ENCODE measurements at regions of chr14 and their contacts with region 1.

Region 1: DNA sequence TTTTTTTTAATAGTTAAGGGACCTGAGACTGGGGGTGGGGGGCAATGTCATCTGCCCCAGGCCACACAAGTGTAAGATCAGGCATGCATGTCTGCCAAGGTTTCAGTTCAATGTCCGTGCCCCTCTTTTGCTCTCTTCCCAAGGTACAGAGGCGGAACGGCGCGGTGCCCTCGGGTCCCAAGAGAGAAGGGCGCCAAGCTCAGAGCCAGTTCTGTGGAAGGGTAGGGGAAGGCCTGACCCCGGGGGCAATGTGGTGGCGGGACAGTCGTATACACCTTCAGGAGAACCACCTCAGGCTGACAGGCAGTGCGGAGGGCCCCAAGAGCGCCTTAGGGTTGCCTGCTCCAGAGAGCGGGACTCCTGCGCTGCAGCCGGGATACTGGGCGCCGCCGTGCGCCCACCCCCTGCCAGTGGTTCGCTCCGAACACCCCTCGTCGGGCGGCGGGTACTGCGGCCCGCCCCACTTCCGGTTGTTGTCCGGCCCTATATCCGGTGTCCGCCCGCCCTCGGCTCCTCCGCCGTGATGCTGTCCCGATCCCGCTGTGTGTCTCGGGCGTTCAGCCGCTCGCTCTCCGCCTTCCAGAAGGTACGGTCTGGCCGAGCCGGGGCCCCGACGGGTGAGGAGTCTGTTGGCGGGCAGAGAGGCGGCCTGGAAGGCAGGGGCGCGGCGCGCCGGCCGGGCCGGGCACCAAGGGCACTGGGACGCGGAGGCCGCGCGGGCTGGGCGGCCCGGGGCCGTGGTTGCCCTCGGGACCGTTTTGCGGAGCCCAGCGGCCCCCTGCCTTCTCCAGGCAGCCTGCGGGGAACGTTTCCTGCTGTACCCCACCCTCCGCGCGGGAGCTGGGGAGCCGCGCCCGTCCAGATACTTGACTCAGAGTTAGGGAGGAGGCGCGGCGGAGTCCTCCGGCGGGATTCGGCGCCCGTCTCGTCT is at the start of gene DLST:
- DNase-seq: peak; percentile 87
- H3K4me3 Mint-ChIP-seq: peak within 1 kb of the TSS; percentile 91
- H3K27ac Mint-ChIP-seq: peak within 1 kb of the TSS; percentile 92
- H3K4me1 Mint-ChIP-seq: peaks cover 61% of the 10 kb centered on the region
- H3K27me3 Mint-ChIP-seq: no peaks in the 10 kb centered on the region
- total RNA-seq, gene DLST: 106 to 108 TPM

Region 2: GRCh38 chr14:74867673-74868072 is 14.0 kb before region 1 on chr14:
- CTCF ChIA-PET with region 1: interaction called, 115 read pairs
- POLR2A ChIA-PET with region 1: interaction called, 54 read pairs
- DNase-seq: peak; percentile 78
- H3K4me3 Mint-ChIP-seq: no peak overlapping the region
- H3K27ac Mint-ChIP-seq: peak overlapping the region; percentile 55
- H3K4me1 Mint-ChIP-seq: peaks cover 19% of the 10 kb centered on the region
- H3K27me3 Mint-ChIP-seq: no peaks in the 10 kb centered on the region

Region 3: GRCh38 chr14:74893614-74894091 is 12.0 kb after region 1 on chr14:
- CTCF ChIA-PET with region 1: interaction called, 6 read pairs
- POLR2A ChIA-PET with region 1: interaction called, 27 read pairs
- DNase-seq: no peak
- H3K4me3 Mint-ChIP-seq: no peak overlapping the region
- H3K27ac Mint-ChIP-seq: no peak overlapping the region
- H3K4me1 Mint-ChIP-seq: peaks cover 8% of the 10 kb centered on the region
- H3K27me3 Mint-ChIP-seq: no peaks in the 10 kb centered on the region

Region 4: DNA sequence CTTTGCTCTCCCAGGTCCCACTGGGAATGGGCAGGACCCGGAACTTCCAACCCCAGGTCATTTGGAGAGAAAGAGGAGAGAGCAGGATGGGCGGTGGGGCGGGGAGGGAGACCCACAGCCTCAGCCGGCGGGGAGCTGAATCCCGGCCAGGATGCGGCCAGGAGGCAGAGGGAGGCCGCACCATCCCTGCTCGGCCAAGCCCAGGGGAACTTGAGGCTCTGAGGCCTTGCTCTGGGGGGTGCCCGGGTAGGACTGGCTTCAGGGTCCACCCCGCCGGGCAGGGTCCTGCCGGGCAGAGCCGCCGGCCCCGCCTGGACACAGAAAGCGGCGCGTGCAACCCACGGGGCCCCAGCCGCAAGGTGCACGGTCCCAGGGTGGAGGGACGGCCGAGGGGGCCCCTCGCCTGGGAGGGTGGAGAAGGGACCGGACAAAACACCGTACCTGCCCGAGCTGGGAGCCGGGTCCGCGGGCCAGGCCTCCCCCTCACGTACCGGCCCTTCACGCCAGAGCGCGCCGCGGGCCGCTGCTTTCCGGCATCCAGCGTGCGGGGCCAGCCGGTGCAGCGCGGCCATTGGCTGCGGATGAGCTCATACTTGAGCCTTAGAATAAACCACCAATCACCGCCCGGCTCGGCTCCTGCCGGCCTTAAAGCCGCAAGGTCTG is 41.2 kb after region 1 on chr14 and contains the start of gene RPS6KL1:
- CTCF ChIA-PET with region 1: no interaction called
- POLR2A ChIA-PET with region 1: interaction called, 13 read pairs
- DNase-seq: peak; percentile 77
- H3K4me3 Mint-ChIP-seq: peak within 1 kb of the TSS; percentile 66
- H3K27ac Mint-ChIP-seq: no peak within 1 kb of the TSS
- H3K4me1 Mint-ChIP-seq: peaks cover 2% of the 10 kb centered on the region
- H3K27me3 Mint-ChIP-seq: peaks cover 19% of the 10 kb centered on the region
- total RNA-seq, gene RPS6KL1: 3.6 to 3.8 TPM

Region 5: GRCh38 chr14:75011356-75011994 is 129.8 kb after region 1 on chr14:
- CTCF ChIA-PET with region 1: no interaction called
- POLR2A ChIA-PET with region 1: no interaction called
- DNase-seq: no peak
- H3K4me3 Mint-ChIP-seq: no peak overlapping the region
- H3K27ac Mint-ChIP-seq: peak overlapping the region; percentile 28
- H3K4me1 Mint-ChIP-seq: peaks cover 25% of the 10 kb centered on the region
- H3K27me3 Mint-ChIP-seq: no peaks in the 10 kb centered on the region

Measured in activated CD4-positive, alpha-beta memory T cell treated with anti-CD3 and anti-CD28 coated beads, Interleukin-2, amount 10 ng/mL, durations not matched to agents 7 days and 5 days (primary cell).